ENCODE measurements at regions of chr2 and their contacts with region 1.

Region 1: GRCh38 chr2:220687231-220687843 is 884.8 kb downstream of the EPHA4 start:
- DNase-seq: peak; percentile 53 to 70 (median 65)
- ATAC-seq: peak; percentile 75 to 89 (median 82)
- H3K4me3 ChIP-seq: no peak overlapping the region
- H3K27ac ChIP-seq: no peak overlapping the region
- H3K4me1 ChIP-seq: no peaks in the 10 kb centered on the region
- H3K27me3 ChIP-seq: no peaks in the 10 kb centered on the region
- CTCF ChIP-seq: peak; percentile 86 to 93 (median 88)
- POLR2A ChIP-seq: no peak

Region 2: DNA sequence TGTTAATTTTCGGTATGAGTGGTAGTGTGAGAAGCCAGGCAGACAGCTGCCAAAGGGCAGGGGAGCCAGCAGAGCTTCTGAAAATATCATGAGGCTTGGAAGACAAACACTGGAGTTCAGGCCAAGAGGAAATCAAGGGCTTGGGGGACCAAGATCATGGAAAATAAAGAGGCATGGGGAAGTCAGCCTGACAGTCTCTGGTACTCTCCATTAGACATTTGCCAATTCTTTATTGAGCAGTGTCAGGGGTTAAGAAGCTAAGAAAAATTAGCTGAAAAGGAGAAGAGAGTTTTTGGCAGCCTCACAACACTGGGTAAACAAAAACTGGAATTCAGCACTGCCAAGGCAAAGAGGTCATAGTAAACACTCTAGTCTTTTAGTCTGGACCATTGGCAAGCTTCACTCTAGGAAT is 272.1 kb after region 1 on chr2:
- intact Hi-C with region 1: loop called in 1 of 10 experiments (anchors 10 kb)
- DNase-seq: peak in 4 of 5 donors; percentile 32 to 46 (median 37)
- ATAC-seq: peak; percentile 76 to 92 (median 86)
- H3K4me3 ChIP-seq: no peak overlapping the region
- H3K27ac ChIP-seq: peak overlapping the region in 6 of 12 donors; percentile 22 to 54 (median 34)
- H3K4me1 ChIP-seq: peaks cover 0 to 43% (median 20%) of the 10 kb centered on the region in 12 donors
- H3K27me3 ChIP-seq: no peaks in the 10 kb centered on the region
- CTCF ChIP-seq: no peak
- POLR2A ChIP-seq: no peak

Region 3: DNA sequence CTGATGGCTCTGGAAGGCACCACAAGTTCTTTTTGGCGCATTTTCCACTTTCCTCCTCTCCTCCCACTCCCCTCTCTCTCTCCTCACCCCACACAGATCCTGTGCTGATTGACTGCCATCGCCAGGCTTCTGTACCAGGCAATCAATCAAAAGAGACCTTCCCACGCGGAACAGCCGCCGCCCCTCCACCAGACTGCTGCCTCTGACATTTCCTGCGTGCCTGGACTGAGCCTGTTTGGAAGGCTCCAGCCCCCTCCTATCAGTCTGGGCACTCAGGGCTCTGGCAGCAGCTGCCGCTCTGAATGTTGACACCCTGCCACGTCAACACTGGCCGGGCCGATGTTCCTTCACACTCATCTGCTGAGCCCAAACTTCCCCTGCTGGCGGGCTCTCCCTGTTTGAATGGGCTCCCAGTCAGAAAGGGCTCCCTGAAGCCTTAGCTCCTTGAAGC is 417.0 kb after region 1 on chr2:
- intact Hi-C with region 1: loop called in 7 of 10 experiments (anchors 5 to 10 kb)
- DNase-seq: peak; percentile 83 to 91 (median 86)
- ATAC-seq: peak; percentile 98 to 99 (median 98)
- H3K4me3 ChIP-seq: peak overlapping the region in 9 of 12 donors; percentile 4 to 25 (median 17)
- H3K27ac ChIP-seq: peak overlapping the region in 11 of 12 donors; percentile 9 to 72 (median 61)
- H3K4me1 ChIP-seq: peaks cover 0 to 28% (median 16%) of the 10 kb centered on the region in 12 donors
- H3K27me3 ChIP-seq: no peaks in the 10 kb centered on the region
- CTCF ChIP-seq: peak in 11 of 12 donors; percentile 8 to 44 (median 20)
- POLR2A ChIP-seq: no peak

Region 4: DNA sequence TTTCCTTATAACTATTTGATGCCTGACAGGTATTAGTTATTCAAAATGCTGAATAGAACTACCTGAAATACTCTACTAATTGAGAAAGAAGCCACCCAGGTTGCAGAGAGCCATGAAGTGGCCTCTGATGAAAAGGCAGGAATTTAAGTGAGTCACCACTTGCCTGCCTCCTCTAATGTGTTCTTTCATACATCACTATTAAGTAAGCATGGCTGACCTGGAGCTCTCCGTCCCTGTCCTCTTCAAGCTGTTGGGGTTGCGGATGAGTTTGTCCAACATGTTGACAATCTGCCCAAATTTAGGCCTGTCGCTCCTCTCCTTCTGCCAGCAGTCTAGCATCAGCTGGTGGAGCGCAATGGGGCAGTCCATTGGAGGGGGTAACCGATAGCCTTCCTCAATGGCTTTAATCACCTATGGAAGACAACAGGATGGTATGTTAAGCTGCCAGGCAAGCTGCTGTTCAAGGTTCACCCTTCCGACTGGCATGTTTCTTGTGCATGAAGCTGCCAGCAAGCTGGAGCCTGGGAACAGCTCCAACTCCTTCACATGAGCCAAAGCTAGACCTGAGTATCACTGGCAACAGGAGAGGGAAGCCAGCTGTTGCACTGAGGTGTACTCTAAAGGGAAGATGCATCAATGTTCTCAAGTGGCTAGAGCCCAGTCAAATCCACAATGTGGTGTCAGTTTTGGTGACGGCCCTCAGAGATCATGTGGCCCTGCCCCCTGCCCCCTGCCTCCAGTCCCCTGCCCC is 742.6 kb after region 1 on chr2:
- intact Hi-C with region 1: loop called in 2 of 10 experiments (anchors 10 kb)
- DNase-seq: peak in 4 of 5 donors; percentile 28 to 65 (median 62)
- ATAC-seq: peak in 3 of 4 donors; percentile 69 to 87 (median 85)
- H3K4me3 ChIP-seq: no peak overlapping the region
- H3K27ac ChIP-seq: no peak overlapping the region
- H3K4me1 ChIP-seq: peaks cover 0 to 5% (median 0%) of the 10 kb centered on the region in 12 donors
- H3K27me3 ChIP-seq: no peaks in the 10 kb centered on the region
- CTCF ChIP-seq: no peak
- POLR2A ChIP-seq: no peak

Region 5: DNA sequence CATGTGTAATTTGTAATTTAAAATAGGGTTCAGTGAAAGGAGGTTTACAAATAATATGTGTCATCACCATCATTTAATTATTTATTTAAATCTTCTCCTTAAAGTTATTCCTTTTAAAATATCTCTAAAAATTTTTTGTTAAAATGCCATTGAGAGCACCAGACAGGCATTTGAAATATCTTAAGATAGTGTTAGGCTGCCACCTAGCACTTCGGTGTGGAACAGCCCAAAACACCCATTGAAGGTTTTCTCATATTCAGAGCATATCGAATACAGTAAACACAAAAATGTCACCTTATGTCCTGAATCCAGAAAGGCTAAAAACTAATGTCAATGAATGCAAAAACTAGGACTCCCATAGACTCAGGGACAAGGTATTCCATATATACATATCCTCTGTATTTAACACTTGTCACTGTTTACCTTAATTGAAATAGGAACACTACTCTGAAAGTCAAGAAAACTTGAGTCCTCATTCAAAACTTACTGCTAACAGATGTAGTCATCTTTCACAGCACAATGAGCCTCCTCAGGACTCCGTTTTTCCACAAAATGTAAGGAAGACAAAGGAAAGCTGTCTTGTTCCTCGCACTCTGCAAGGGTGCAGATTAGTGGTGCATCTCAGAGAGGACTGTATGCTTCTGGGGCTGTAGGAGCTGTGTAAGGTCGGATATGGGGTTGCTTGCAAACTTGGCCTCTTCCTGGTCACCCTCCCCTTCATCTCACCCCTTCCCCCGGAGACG is 1281.9 kb after region 1 on chr2:
- intact Hi-C with region 1: loop called in 3 of 10 experiments (anchors 5 to 10 kb)
- DNase-seq: no peak
- ATAC-seq: peak in 3 of 4 donors; percentile 44 to 62 (median 62)
- H3K4me3 ChIP-seq: no peak overlapping the region
- H3K27ac ChIP-seq: no peak overlapping the region
- H3K4me1 ChIP-seq: no peaks in the 10 kb centered on the region
- H3K27me3 ChIP-seq: peaks cover 0 to 24% (median 0%) of the 10 kb centered on the region in 9 donors
- CTCF ChIP-seq: peak; percentile 37 to 80 (median 62)
- POLR2A ChIP-seq: no peak